Mammary epithelial cell (primary cell): ENCODE measurements at regions of chr5 and their contacts with region 1.

Region 1: DNA sequence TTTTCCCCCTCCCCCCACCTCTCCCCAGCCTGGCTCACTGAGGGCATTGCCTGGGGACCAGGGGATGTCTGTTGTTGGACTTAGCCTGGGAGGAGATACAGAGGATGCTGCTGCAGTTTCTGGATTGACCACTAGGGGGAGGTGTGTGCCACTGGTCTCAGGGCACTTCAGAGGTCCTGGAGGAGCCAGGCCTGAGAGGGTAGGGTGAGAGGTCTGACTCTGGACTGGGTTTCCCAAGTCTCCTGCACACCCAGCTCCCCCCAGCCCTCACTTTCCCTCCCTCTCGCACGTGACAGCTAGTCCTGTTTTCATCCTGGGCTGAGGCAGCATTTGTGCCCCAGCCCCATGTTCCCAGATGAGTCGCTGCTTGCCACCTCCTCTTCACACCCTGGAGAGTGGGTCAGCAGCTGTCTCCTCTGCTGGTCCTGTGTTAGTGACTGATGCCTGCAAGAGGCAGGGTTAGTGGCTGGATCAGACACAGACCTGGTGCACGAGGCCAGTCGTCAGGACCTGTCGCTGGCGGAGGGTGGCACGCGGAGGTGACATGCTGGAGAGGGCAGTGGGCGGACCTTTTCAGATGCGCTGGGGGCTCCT is 4.4 kb downstream of the IL3 start:
- DNase-seq: peak; percentile 67
- H3K4me3 ChIP-seq: no peak overlapping the region
- H3K27ac ChIP-seq: no peak overlapping the region
- H3K4me1 ChIP-seq: peaks cover 8% of the 10 kb centered on the region
- H3K27me3 ChIP-seq: no peaks in the 10 kb centered on the region
- CTCF ChIP-seq: peak; percentile 98 to 99

Region 2: GRCh38 chr5:131423056-131423455 is 641.8 kb before region 1 on chr5:
- CTCF ChIA-PET with region 1: no interaction called
- dilution Hi-C with region 1: no loop called
- in situ Hi-C with region 1: no loop called
- intact Hi-C with region 1: loop called (anchors 1 kb)
- DNase-seq: no peak
- H3K4me3 ChIP-seq: no peak overlapping the region
- H3K27ac ChIP-seq: no peak overlapping the region
- H3K4me1 ChIP-seq: no peaks in the 10 kb centered on the region
- H3K27me3 ChIP-seq: no peaks in the 10 kb centered on the region
- CTCF ChIP-seq: peak; percentile 26 to 33

Region 3: DNA sequence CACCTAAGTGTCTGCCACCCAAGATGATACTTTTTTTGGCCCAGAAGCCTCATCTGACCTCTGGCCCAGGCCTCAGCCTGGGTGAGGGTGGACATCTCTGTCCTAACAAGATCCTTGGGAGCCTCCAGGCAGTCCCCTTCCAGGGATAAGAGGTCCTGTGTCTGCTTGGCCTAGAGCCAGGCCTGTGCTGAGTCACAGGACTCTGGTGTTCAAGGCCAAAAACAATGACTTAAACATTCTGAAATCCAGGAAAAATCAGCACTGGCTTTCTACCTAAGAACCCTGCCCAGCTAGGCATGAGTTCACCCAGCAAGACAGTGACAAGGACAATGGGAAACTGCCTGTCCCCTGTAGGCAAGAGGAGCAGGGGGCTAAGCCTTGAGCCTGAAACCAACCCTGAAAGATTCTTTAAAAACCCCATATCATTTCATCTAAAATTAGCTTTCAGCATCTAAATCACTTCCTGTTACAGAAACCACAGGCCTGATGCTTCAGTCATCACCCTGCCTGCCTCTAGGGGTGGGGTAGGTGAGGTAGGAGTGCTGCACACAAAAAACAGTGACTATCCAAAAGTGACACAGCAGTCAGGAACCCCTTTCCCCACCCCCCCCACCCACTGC is 38.6 kb after region 1 on chr5:
- CTCF ChIA-PET with region 1: interaction called, 11 read pairs
- dilution Hi-C with region 1: no loop called
- in situ Hi-C with region 1: no loop called
- intact Hi-C with region 1: no loop called
- DNase-seq: peak; percentile 94
- H3K4me3 ChIP-seq: no peak overlapping the region
- H3K27ac ChIP-seq: peak overlapping the region; percentile 96
- H3K4me1 ChIP-seq: peaks cover 46% of the 10 kb centered on the region
- H3K27me3 ChIP-seq: no peaks in the 10 kb centered on the region
- CTCF ChIP-seq: peak in 1 of 2 donors; percentile 26

Region 4: GRCh38 chr5:132190161-132190817 is 125.5 kb after region 1 on chr5:
- CTCF ChIA-PET with region 1: no interaction called
- dilution Hi-C with region 1: no loop called
- in situ Hi-C with region 1: no loop called
- intact Hi-C with region 1: loop called (anchors 1 kb)
- DNase-seq: peak; percentile 55
- H3K4me3 ChIP-seq: no peak overlapping the region
- H3K27ac ChIP-seq: no peak overlapping the region
- H3K4me1 ChIP-seq: no peaks in the 10 kb centered on the region
- H3K27me3 ChIP-seq: no peaks in the 10 kb centered on the region
- CTCF ChIP-seq: peak; percentile 72 to 85

Region 5: DNA sequence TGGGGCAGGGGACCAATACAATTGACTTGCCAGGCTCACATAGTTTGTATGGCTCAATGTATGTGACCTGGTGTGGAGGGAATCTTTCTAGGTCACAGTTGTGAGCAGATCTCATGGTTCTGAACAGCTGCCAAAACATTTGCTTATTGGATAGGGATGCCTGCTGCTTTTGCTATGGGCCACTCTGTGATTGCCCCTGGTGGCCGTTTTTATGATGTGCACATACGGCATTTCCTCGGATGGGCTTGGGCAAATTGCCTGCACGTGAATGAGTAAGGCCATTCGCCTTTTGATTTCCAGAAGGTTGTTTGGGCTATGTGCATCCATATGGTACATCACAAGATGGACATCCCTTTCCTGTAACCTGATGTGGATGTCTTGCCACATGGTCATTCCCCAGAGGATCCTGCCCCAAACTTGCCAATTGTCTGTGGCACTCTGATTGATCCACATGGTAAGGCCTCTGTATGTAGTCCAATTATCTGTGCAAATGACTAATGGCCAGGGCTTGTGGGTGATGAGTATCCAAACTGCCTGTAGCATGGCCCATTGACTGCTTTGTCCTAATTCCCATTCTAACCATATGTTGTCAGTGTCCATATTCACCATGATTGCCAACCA is 218.7 kb after region 1 on chr5:
- CTCF ChIA-PET with region 1: no interaction called
- dilution Hi-C with region 1: no loop called
- in situ Hi-C with region 1: no loop called
- intact Hi-C with region 1: loop called (anchors 5 kb)
- DNase-seq: peak; percentile 48
- H3K4me3 ChIP-seq: no peak overlapping the region
- H3K27ac ChIP-seq: no peak overlapping the region
- H3K4me1 ChIP-seq: peaks cover 3% of the 10 kb centered on the region
- H3K27me3 ChIP-seq: no peaks in the 10 kb centered on the region
- CTCF ChIP-seq: peak; percentile 58 to 77

Region 6: DNA sequence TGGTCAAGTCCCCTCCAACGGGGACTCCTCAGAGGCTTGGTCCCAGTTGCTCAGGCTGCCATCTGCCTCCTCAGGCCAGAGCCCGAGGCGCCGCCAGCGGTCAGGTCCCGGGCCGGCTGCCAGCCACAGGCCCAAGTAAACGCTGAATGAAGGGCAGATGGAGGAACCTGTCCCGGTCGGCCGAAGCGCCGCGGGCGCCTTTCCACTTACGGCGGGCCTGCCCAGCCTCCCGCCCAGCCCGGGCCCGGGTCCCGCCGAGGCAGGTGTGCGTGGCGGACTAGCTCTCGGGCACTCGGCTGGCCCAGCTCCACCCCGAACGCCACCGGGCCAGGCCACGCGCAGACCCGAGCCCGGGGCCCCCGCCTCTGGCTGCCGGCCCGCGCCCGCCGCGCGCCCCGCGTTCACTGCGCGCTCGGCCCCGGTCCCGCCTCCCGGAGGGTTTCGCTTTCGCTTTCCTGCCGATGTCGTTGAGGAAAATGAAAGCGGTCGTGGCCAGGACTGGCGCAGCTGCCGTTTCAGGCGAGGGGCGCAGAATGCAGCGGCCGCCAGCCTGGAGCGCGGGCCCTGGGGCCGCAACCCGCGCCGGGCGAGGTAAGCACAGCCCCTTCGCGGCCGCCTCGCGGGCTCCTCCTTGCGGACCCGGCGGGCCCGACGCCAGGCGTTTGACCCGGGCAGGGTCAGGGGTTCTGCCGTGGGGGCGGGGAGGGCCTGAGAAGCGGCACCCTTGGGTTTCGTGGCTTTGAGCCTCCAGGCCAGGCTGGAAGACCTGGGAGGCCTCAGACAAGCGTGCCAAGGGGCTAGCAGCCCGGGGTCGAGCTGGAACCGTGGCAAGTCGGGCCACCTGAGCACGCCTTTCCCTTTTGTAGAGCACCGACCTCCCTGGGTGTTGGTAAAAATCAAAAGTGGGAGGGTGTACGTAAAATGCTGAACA is 345.9 kb after region 1 on chr5:
- CTCF ChIA-PET with region 1: no interaction called
- dilution Hi-C with region 1: no loop called
- in situ Hi-C with region 1: no loop called
- intact Hi-C with region 1: loop called (anchors 10 kb)
- DNase-seq: no peak
- H3K4me3 ChIP-seq: peak overlapping the region; percentile 47 to 73 (median 68)
- H3K27ac ChIP-seq: peak overlapping the region; percentile 41
- H3K4me1 ChIP-seq: peaks cover 24% of the 10 kb centered on the region
- H3K27me3 ChIP-seq: no peaks in the 10 kb centered on the region
- CTCF ChIP-seq: peak; percentile 26 to 76